PC-9 (cell line): ENCODE measurements at regions of chr20 and their contacts with region 1.

Region 1: GRCh38 chr20:44720617-44720993 is 5.4 kb downstream of the CCN5 start:
- DNase-seq: peak; percentile 71 to 83
- H3K4me3 ChIP-seq: no peak overlapping the region
- H3K27ac ChIP-seq: peak overlapping the region; percentile 40
- H3K4me1 ChIP-seq: peaks cover 22% of the 10 kb centered on the region
- H3K27me3 ChIP-seq: no peaks in the 10 kb centered on the region
- CTCF ChIP-seq: no peak

Region 2: GRCh38 chr20:44448753-44449546 is 271.7 kb before region 1 on chr20:
- CTCF ChIA-PET with region 1: no interaction called
- POLR2A ChIA-PET with region 1: no interaction called
- intact Hi-C with region 1: no loop called
- DNase-seq: no peak
- H3K4me3 ChIP-seq: no peak overlapping the region
- H3K27ac ChIP-seq: no peak overlapping the region
- H3K4me1 ChIP-seq: no peaks in the 10 kb centered on the region
- H3K27me3 ChIP-seq: no peaks in the 10 kb centered on the region
- CTCF ChIP-seq: peak; percentile 54

Region 3: GRCh38 chr20:44861531-44862006 is 141.0 kb after region 1 on chr20:
- CTCF ChIA-PET with region 1: no interaction called
- POLR2A ChIA-PET with region 1: no interaction called
- intact Hi-C with region 1: loop called (anchors 1 kb)
- DNase-seq: peak in 1 of 2 experiments; percentile 39
- H3K4me3 ChIP-seq: no peak overlapping the region
- H3K27ac ChIP-seq: no peak overlapping the region
- H3K4me1 ChIP-seq: peaks cover 8% of the 10 kb centered on the region
- H3K27me3 ChIP-seq: 0 out of 2 replicates have a peak, but pooled peaks cover 2% of the 10 kb centered on the region
- CTCF ChIP-seq: no peak